CD4-positive, alpha-beta memory T cell (primary cell): ENCODE measurements at regions of chr4 and their contacts with region 1.

Region 1: GRCh38 chr4:152535903-152536544 is at the start of gene FBXW7:
- DNase-seq: peak; percentile 99 to 100 (median 100)
- H3K4me3 ChIP-seq: peak within 1 kb of the TSS; percentile 66 to 93
- H3K4me3 Mint-ChIP-seq: peak within 1 kb of the TSS; percentile 96 to 99 (median 98)
- H3K27ac ChIP-seq: peak within 1 kb of the TSS; percentile 87
- H3K27ac Mint-ChIP-seq: peak within 1 kb of the TSS; percentile 93 to 100 (median 99)
- H3K4me1 ChIP-seq: peaks cover 72% of the 10 kb centered on the region
- H3K4me1 Mint-ChIP-seq: peaks cover 43 to 77% (median 62%) of the 10 kb centered on the region in 4 donors
- H3K27me3 ChIP-seq: no peaks in the 10 kb centered on the region
- H3K27me3 Mint-ChIP-seq: no peaks in the 10 kb centered on the region
- total RNA-seq, gene FBXW7: 138 to 148 TPM

Region 2: DNA sequence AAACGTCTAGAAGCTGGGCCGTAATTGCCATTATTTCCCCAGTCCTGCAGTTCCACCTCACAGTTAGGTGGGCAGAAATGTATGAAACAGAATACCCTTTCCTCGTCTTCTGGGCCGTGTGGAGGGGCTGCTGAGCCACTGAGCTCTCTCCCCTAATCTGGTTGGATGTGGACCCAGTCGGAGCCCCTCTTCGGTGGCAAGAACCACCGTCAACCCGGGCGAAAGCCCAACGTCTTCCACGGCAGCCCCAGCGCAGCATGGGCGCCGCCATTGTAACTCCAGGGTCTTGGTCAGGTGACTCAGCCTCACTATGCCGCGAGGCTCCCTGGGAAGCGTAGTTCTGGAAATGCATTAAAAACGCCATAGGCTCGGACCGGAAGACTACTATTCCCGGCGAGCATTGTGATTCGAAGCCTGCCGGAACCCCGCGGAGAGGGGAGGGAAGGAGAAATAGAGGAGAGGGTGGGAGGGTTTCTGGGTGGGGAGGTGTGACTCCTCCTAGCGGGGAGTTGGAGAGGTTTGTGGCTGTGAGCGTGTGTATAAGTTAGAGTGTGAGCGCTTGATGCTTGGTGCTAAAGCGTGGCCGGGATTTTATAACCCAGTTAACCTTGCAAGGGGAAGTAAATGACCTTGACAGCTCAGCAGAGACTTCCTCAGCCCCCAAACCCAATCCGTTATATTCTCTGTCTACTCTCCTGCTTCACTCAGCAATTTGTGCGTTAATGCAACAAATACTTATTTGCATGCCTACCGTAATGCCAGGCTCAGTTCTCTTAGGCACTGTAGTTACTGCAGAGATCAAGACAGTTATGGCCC is 775.1 kb before region 1 on chr4 and contains the start of gene GATB:
- CTCF ChIA-PET with region 1: no interaction called
- POLR2A ChIA-PET with region 1: interaction called, 3 read pairs
- intact Hi-C with region 1: loop called (anchors 1 kb)
- DNase-seq: peak; percentile 91 to 97 (median 93)
- H3K4me3 ChIP-seq: peak within 1 kb of the TSS; percentile 77 to 84
- H3K4me3 Mint-ChIP-seq: peak within 1 kb of the TSS; percentile 96 to 100 (median 98)
- H3K27ac ChIP-seq: peak within 1 kb of the TSS; percentile 60
- H3K27ac Mint-ChIP-seq: peak within 1 kb of the TSS; percentile 87 to 98 (median 97)
- H3K4me1 ChIP-seq: peaks cover 13% of the 10 kb centered on the region
- H3K4me1 Mint-ChIP-seq: peaks cover 13 to 19% (median 17%) of the 10 kb centered on the region in 4 donors
- H3K27me3 ChIP-seq: no peaks in the 10 kb centered on the region
- H3K27me3 Mint-ChIP-seq: peaks cover under 1 to 1% of the 10 kb centered on the region in 2 donors
- total RNA-seq, gene GATB: 10.8 to 12.5 TPM

Region 3: GRCh38 chr4:152515678-152516077 is 20.3 kb before region 1 on chr4:
- CTCF ChIA-PET with region 1: interaction called, 3 read pairs
- POLR2A ChIA-PET with region 1: interaction called, 21 read pairs
- intact Hi-C with region 1: loop called (anchors 1 kb)
- DNase-seq: no peak
- H3K4me3 ChIP-seq: no peak overlapping the region
- H3K4me3 Mint-ChIP-seq: no peak overlapping the region
- H3K27ac ChIP-seq: no peak overlapping the region
- H3K27ac Mint-ChIP-seq: no peak overlapping the region
- H3K4me1 ChIP-seq: peaks cover 30% of the 10 kb centered on the region
- H3K4me1 Mint-ChIP-seq: peaks cover 39 to 66% (median 54%) of the 10 kb centered on the region in 4 donors
- H3K27me3 ChIP-seq: no peaks in the 10 kb centered on the region
- H3K27me3 Mint-ChIP-seq: no peaks in the 10 kb centered on the region

Region 4: DNA sequence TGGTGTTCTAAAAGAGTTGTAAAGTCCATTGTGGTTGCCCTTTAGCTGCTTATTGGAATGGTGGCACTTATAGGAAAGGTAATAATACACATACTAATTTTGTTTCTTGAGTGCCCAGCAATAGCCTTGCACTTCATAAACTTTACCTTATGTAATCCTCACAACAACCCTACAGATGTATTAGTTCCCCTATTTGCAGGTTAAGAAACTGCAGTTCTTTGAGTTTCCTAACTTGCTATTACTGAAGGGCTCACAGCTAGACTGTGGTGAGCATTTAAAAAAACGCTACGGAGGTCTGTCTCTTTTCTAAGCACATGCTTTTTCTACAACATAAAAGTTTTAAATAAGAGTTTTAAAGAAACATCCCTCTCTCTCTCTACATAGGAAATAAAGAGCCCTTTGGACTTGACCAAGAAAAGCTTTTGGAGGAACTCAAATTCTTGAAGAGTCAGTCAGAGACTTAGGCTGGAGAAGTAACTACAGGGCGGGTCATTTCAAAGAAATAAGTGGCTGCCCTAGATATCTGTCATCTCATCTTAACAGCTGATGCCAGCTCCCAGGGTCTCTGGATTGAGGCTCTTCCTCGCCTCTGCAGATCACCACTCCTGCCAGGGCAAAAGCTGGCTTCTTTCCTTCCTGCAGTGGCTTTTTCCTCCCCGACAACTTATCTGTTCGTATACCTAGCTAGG is 41.8 kb after region 1 on chr4:
- CTCF ChIA-PET with region 1: no interaction called
- POLR2A ChIA-PET with region 1: interaction called, 10 read pairs
- intact Hi-C with region 1: no loop called
- DNase-seq: no peak
- H3K4me3 ChIP-seq: no peak overlapping the region
- H3K4me3 Mint-ChIP-seq: no peak overlapping the region
- H3K27ac ChIP-seq: no peak overlapping the region
- H3K27ac Mint-ChIP-seq: no peak overlapping the region
- H3K4me1 ChIP-seq: peaks cover 3% of the 10 kb centered on the region
- H3K4me1 Mint-ChIP-seq: peaks cover 0 to 3% (median 0%) of the 10 kb centered on the region in 4 donors
- H3K27me3 ChIP-seq: no peaks in the 10 kb centered on the region
- H3K27me3 Mint-ChIP-seq: no peaks in the 10 kb centered on the region

Region 5: DNA sequence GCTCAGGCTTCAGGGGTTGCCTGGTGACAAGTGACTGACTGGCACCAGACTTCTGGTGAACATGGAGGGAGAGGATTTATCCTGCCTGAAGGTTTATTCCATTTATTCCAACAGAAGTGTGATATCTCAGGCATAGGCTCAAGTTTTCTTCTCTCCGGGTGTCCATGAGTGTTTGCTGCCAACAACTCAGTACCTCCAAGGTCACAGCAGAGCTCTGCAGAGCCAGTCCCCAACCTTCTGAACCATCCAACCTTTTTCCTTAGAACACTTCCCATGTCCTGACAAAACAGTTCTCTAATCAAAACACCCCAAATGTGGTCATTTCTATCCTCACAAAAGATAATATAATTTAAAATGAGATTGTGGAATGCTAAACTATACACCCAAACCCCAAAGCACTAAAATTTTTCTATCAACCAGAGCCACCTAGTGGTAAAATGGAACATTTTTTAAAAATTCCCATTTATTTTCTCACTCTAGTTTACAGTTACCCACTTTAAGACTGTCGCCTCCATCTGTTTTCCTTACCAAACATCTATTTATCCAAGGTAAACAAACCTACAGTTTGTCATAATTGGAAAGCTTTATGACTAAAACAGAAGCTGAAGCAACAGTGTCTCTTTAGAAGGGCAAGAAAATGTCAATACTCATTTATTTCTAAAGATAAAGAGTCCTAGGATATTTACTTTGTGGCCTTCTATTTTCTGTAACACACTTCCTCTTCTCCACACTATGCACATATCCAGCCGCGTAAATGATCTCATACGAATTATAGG is 104.2 kb after region 1 on chr4:
- CTCF ChIA-PET with region 1: interaction called, 27 read pairs
- POLR2A ChIA-PET with region 1: interaction called, 18 read pairs
- intact Hi-C with region 1: loop called (anchors 1 kb)
- DNase-seq: peak in 4 of 5 donors; percentile 25 to 52 (median 34)
- H3K4me3 ChIP-seq: no peak overlapping the region
- H3K4me3 Mint-ChIP-seq: no peak overlapping the region
- H3K27ac ChIP-seq: no peak overlapping the region
- H3K27ac Mint-ChIP-seq: peak overlapping the region in 3 of 7 donors; percentile 18 to 64 (median 43)
- H3K4me1 ChIP-seq: peaks cover 23% of the 10 kb centered on the region
- H3K4me1 Mint-ChIP-seq: peaks cover 24 to 27% (median 27%) of the 10 kb centered on the region in 4 donors
- H3K27me3 ChIP-seq: no peaks in the 10 kb centered on the region
- H3K27me3 Mint-ChIP-seq: no peaks in the 10 kb centered on the region